Esophagus muscularis mucosa (tissue), 4 donors: ENCODE measurements at regions of chr15 and their contacts with region 1.

Region 1: GRCh38 chr15:59814409-59814808 is 125.3 kb upstream of the BNIP2 start:
- DNase-seq: peak; percentile 47
- H3K4me3 ChIP-seq: no peak overlapping the region
- H3K27ac ChIP-seq: no peak overlapping the region
- H3K4me1 ChIP-seq: no peaks in the 10 kb centered on the region
- H3K27me3 ChIP-seq: peaks cover 0 to 26% (median 0%) of the 10 kb centered on the region in 4 donors
- CTCF ChIP-seq: no peak
- EP300 ChIP-seq: no peak
- POLR2A ChIP-seq: no peak

Region 2: GRCh38 chr15:59751552-59752413 is 62.6 kb before region 1 on chr15:
- intact Hi-C with region 1: loop called (anchors 10 kb)
- DNase-seq: peak; percentile 39
- H3K4me3 ChIP-seq: no peak overlapping the region
- H3K27ac ChIP-seq: no peak overlapping the region
- H3K4me1 ChIP-seq: no peaks in the 10 kb centered on the region
- H3K27me3 ChIP-seq: peaks cover 0 to 26% (median 0%) of the 10 kb centered on the region in 4 donors
- CTCF ChIP-seq: no peak
- EP300 ChIP-seq: no peak
- POLR2A ChIP-seq: no peak

Region 3: GRCh38 chr15:60315878-60316277 is 501.5 kb after region 1 on chr15:
- intact Hi-C with region 1: no loop called
- DNase-seq: no peak
- H3K4me3 ChIP-seq: no peak overlapping the region
- H3K27ac ChIP-seq: no peak overlapping the region
- H3K4me1 ChIP-seq: no peaks in the 10 kb centered on the region
- H3K27me3 ChIP-seq: no peaks in the 10 kb centered on the region
- CTCF ChIP-seq: no peak
- EP300 ChIP-seq: no peak
- POLR2A ChIP-seq: no peak